Activated CD4-positive, alpha-beta T cell treated with anti-CD3 and anti-CD28 coated beads, Interleukin-2, amount 10 ng/mL, durations not matched to agents 24 days and 14 days (primary cell): ENCODE measurements at regions of chr1 and their contacts with region 1.

Region 1: GRCh38 chr1:3423245-3423829 is 31.1 kb upstream of the ARHGEF16 start:
- DNase-seq: no peak
- H3K4me3 Mint-ChIP-seq: no peak overlapping the region
- H3K27ac Mint-ChIP-seq: no peak overlapping the region
- H3K4me1 Mint-ChIP-seq: no peaks in the 10 kb centered on the region
- H3K27me3 Mint-ChIP-seq: peaks cover 2% of the 10 kb centered on the region

Region 2: GRCh38 chr1:3012456-3013291 is 410.7 kb before region 1 on chr1:
- intact Hi-C with region 1: loop called (anchors 10 kb)
- DNase-seq: peak; percentile 83
- H3K4me3 Mint-ChIP-seq: no peak overlapping the region
- H3K27ac Mint-ChIP-seq: no peak overlapping the region
- H3K4me1 Mint-ChIP-seq: no peaks in the 10 kb centered on the region
- H3K27me3 Mint-ChIP-seq: no peaks in the 10 kb centered on the region

Region 3: GRCh38 chr1:3380469-3380868 is 42.9 kb before region 1 on chr1:
- intact Hi-C with region 1: no loop called
- DNase-seq: no peak
- H3K4me3 Mint-ChIP-seq: no peak overlapping the region
- H3K27ac Mint-ChIP-seq: no peak overlapping the region
- H3K4me1 Mint-ChIP-seq: no peaks in the 10 kb centered on the region
- H3K27me3 Mint-ChIP-seq: no peaks in the 10 kb centered on the region